ENCODE measurements at regions of chr5 and their contacts with region 1.

Region 1: DNA sequence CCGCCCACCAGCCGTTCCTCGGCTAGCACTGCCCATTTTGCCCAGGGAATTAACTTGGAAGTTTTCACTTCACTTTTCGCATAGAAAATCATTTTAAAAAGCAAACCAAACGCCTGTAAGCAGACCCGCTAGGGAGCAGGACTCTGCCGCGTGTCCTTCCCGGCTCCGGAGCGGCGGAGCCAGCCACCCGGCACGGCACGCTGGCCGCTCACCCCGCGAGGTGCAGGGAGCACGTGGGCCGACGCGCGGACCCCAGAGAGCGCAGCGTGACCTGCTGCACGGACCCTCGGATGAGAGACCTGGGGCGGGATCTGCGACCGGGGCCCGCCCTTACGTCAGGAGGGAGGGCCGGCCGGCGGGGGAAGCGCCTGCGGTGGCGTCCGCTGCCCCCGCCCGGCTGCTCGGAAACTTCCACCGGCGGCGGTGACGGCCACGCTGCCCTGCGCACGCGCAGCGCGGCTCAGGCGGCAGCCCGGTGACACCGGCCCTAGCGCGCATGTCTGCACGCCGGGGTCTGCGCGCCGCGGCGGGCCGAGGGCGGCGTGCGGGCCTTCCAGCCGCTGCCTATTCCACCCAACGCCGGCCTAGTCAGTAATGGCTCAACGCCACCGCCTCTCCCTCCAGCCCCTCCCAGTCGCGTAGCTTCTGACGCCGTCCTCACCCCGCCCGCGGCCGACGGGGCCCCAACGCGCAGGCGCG is 506 bp upstream of the TENT4A start:
- DNase-seq: peak; percentile 98
- H3K4me3 Mint-ChIP-seq: peak overlapping the region; percentile 81
- H3K27ac Mint-ChIP-seq: peak overlapping the region; percentile 91
- H3K4me1 Mint-ChIP-seq: peaks cover 29% of the 10 kb centered on the region
- H3K27me3 Mint-ChIP-seq: no peaks in the 10 kb centered on the region

Region 2: DNA sequence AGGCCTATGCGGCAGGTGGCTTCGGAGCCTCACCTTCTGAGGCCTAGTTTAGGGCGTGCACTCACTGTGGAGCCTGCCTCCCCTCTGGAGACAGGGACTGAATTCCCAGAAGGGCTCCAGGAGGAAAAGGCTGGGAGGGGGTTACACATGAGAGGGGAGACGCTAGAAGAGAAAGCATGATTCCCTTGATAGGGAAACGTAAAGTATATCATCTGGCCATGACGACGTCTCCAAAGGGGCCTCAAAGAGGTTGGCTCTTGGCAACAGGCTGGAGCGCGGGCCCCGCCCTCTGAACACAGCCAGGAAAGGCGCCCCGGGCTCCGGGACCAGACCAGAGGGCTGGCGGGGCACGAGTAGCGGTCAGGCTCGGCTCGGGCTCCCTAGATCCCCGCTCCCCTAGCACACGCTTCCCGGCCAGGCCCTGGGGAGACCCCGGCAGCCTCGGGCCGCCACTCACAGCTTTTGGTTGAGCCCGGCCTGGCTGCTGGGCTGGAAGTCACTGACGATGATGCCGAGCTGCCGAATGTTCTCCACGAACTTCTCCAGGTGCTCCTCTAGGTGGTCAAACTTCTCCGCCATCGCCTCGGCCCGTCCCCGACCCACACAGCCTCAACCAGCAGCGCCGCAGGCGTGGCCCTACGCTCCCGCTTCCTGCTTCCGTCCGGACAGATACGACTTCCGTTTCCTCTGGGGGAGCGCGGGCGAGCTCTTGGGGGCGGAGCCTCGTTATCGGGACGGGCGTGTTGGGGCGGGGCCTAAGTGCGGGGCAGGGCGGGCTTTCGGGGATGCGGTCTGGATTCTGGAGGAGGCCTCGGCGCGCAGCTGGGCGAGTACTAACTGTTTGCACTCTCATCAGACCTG is 334.6 kb before region 1 on chr5 and contains the start of gene MED10:
- CTCF ChIA-PET with region 1: no interaction called
- POLR2A ChIA-PET with region 1: interaction called, 7 read pairs
- intact Hi-C with region 1: loop called (anchors 1 kb)
- DNase-seq: peak; percentile 98
- H3K4me3 Mint-ChIP-seq: peak within 1 kb of the TSS; percentile 92
- H3K27ac Mint-ChIP-seq: peak within 1 kb of the TSS; percentile 98
- H3K4me1 Mint-ChIP-seq: peaks cover 37% of the 10 kb centered on the region
- H3K27me3 Mint-ChIP-seq: no peaks in the 10 kb centered on the region
- total RNA-seq, gene MED10: 49.8 to 51.6 TPM

Region 3: DNA sequence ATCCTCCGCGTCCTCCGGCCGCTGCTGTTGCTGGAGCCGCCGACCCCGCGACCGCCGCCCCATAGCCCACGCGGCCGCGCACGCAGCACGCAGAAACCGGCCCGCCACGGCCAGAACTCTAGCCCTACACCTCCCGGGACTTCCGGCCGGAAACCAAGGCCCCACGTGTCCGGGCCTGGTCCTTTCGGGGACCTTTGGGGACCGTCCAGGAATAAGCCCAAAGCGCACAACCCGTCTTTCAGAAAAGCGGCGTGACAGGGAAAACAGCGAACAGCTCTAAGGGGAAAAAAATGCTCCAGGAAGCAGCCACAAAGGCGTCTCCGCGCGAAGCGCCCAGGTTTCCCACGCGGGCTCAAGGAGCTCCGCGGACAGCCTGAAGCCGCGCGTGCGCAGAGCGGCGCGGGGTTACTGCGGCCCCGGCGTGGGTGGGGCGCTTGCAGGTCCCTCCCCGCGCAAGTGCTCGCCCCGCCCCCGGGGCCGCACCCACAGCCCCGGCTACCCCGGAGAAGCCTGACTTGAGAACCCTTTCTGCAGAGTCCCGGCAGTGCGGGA is 79.7 kb before region 1 on chr5 and contains the starts of genes NSUN2 and SRD5A1:
- CTCF ChIA-PET with region 1: no interaction called
- POLR2A ChIA-PET with region 1: interaction called, 6 read pairs
- intact Hi-C with region 1: loop called (anchors 1 kb)
- DNase-seq: peak; percentile 92
- H3K4me3 Mint-ChIP-seq: peak within 1 kb of the TSS; percentile 97
- H3K27ac Mint-ChIP-seq: peak within 1 kb of the TSS; percentile 95
- H3K4me1 Mint-ChIP-seq: peaks cover 40% of the 10 kb centered on the region
- H3K27me3 Mint-ChIP-seq: no peaks in the 10 kb centered on the region
- total RNA-seq, gene NSUN2: 78.5 to 86.7 TPM
- total RNA-seq, gene SRD5A1: 9.5 to 11.0 TPM

Region 4: DNA sequence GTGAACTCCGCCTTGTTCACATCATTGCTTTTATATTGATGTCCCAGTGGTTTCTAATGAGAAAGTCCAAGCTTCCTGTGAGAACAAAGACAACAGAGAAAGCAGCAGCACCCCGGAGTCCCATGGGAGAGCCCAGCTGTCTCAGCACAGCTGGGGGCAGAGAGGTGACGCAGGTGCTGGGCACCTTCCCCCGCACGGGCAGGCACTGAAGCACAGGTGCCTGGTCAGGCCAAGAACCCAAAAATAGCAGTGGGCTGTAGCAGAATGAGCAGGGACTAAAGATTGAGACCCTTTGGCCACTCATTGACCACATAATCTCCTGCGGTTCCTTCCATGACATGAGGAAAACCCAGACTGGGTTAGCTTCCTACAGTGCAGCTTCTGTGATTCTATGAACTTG is 60.7 kb before region 1 on chr5:
- CTCF ChIA-PET with region 1: no interaction called
- POLR2A ChIA-PET with region 1: no interaction called
- intact Hi-C with region 1: no loop called
- DNase-seq: no peak
- H3K4me3 Mint-ChIP-seq: no peak overlapping the region
- H3K27ac Mint-ChIP-seq: no peak overlapping the region
- H3K4me1 Mint-ChIP-seq: no peaks in the 10 kb centered on the region
- H3K27me3 Mint-ChIP-seq: no peaks in the 10 kb centered on the region

Region 5: DNA sequence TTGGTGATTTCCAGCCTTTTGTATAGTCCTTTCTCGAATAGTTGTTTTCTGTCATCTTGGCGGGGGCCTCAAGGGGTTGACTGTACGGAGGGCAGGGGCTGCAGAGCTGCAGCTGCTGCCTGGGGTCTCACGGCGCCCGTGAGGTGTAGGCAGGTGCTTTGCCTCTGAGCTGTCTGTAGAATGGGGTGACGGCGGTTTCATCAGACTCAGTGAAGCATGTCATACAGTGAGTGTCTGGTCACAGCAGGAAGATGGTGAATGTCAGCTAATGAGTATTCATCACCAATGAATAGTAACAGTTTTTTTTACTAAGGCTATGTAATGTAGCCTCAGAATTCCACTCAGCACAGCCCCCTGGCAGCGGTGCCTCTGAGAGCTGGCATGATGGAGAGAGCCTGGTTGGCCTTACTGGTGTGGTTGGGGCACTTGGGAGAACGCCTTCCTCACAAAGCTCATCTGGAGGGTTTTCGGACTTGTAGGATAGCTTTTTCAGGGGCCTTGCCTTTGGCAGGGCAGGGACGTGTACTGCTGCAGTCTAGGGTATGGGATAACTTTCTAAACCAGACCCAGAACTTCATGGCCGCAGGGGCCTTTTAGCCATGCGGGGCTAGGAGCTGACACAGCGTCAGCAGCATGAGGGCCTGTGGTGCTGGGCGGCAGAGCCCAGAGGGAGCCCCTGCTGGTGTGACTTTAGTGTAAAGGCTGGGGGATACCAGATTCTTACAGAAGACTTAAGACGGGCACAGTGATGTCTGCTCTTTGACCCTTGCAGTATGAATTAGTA is 15.5 kb after region 1 on chr5:
- CTCF ChIA-PET with region 1: interaction called, 3 read pairs
- POLR2A ChIA-PET with region 1: interaction called, 8 read pairs
- intact Hi-C with region 1: loop called (anchors 2 kb)
- DNase-seq: peak; percentile 35
- H3K4me3 Mint-ChIP-seq: no peak overlapping the region
- H3K27ac Mint-ChIP-seq: peak overlapping the region; percentile 58
- H3K4me1 Mint-ChIP-seq: peaks cover 91% of the 10 kb centered on the region
- H3K27me3 Mint-ChIP-seq: no peaks in the 10 kb centered on the region

Region 6: DNA sequence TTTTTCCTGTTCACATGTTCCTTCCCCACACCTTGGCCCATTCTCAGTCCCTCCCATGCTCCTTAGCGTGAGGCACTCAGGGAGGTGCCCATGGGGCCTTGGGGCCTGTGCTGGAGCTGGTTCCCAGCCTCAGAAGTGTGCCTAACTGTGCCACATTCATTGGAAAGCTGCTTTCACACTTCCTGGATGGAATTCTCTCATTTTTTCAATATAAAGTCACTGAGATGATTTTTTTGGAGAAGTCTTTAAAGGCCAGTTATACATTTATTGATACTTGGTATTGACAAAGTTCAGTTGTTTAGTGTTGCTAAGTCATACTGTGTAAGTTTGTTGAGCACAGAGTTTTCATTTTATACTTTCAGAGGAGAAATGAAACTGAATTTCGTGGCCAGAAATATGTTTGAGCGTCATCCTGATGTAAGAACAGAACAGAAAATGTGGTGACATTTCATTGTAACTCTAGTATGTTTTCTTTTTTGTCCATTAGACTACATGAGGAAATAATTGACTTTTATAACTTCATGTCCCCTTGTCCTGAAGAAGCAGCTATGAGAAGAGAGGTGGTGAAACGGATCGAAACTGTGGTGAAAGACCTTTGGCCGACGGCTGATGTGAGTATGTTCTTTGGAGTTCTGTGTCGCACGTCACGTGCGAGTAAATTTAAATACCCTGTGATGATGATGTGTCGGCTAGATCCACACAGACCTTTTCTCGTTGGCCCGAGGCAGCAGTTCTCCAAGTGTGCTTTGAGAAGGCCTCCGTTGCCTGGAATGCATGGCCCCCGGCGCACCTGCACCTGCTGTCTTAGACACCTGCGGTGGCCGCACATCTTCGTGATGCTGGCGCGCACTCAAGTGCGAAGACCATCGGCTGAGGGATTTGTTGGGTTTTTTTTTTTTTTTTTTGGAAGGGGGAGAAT is 24.6 kb after region 1 on chr5:
- CTCF ChIA-PET with region 1: no interaction called
- POLR2A ChIA-PET with region 1: interaction called, 4 read pairs
- intact Hi-C with region 1: loop called (anchors 1 kb)
- DNase-seq: peak; percentile 32
- H3K4me3 Mint-ChIP-seq: peak overlapping the region; percentile 10
- H3K27ac Mint-ChIP-seq: peak overlapping the region; percentile 84
- H3K4me1 Mint-ChIP-seq: peaks cover 54% of the 10 kb centered on the region
- H3K27me3 Mint-ChIP-seq: no peaks in the 10 kb centered on the region

Region 7: GRCh38 chr5:6745706-6746222 is 33.0 kb after region 1 on chr5:
- CTCF ChIA-PET with region 1: interaction called, 3 read pairs
- POLR2A ChIA-PET with region 1: no interaction called
- intact Hi-C with region 1: loop called (anchors 1 kb)
- DNase-seq: no peak
- H3K4me3 Mint-ChIP-seq: no peak overlapping the region
- H3K27ac Mint-ChIP-seq: no peak overlapping the region
- H3K4me1 Mint-ChIP-seq: peaks cover 4% of the 10 kb centered on the region
- H3K27me3 Mint-ChIP-seq: no peaks in the 10 kb centered on the region

Region 8: DNA sequence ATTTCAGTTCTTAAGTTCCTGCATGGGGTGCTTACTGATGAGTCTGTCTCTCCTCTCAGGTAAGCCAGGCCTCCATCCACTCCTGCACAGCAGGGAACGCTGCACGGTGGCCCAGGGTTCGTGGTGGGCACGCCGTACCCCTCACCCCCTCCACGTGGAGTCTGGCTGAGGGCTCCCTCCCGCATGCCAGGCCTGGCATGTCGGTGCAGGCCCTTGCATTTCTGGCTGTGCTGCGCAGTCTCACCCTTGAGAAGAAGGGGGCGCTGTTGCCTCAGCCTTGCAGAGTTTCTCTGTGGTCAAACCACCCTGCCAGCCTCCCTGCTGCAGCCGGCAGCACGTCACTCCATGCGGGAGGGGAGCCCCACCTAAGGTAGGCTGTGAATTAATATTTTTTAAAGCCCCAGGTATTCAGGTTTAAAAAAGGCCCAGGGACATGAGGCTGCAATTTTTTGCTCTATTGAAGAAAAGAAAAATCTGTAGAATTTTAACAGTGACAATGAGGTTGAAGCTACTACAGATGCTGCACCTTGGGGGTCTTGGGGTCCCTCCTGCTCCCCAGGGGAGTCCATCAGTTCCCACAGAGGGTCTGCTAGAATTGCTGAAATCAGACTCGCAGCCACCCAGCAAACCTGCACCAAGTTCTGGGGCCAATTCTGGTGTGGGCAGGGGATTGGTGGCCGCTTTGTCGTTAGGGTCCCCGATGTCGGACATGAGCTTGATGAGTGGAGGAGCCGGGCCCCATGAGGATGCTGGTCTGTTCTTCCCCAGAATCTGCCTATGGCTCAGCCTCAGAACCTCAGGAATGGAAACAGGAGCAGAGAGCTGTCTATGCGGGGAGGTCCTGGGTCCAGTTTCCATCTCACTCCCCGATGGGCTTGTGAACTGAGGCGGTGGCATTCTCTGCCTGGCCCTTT is 53.1 kb after region 1 on chr5:
- CTCF ChIA-PET with region 1: no interaction called
- POLR2A ChIA-PET with region 1: no interaction called
- intact Hi-C with region 1: no loop called
- DNase-seq: peak; percentile 82
- H3K4me3 Mint-ChIP-seq: no peak overlapping the region
- H3K27ac Mint-ChIP-seq: no peak overlapping the region
- H3K4me1 Mint-ChIP-seq: no peaks in the 10 kb centered on the region
- H3K27me3 Mint-ChIP-seq: peaks cover 2% of the 10 kb centered on the region